Posterior vena cava (tissue), 2 donors: ENCODE measurements at regions of chr10 and their contacts with region 1.

Region 1: GRCh38 chr10:77619964-77620703 is 17.5 kb downstream of the KCNMA1 start:
- DNase-seq: no peak

Region 2: DNA sequence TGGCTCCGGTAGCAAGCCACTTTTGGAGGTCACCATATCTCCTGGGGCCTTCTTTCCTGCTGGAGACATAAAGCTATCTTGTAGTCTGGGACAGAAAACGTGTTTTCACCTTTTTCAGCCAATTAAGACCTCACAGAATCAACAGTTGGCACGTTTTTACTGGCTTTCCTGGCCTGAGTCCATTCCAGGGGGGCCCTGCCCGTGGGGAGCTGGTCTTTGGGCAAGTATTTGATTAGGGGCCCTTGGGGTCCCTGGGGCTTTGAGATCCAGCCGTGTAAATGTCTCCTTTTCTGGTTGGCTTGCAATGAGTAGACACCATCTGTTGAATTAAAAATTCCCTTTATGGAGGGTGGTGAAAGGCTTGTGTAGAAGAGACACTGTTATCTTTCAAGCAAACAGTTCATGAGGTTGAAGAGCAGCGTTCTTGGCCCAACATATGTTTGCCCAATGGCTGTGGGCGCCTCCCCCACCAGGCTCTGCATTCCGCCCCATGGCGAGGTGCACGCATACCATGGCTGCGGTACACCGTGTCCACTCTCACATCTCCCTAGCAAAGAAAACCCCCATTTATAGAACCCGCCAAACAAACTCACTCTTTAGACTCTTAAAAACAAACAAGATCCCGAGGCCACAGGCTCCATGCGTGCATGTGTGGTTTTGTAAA is 1595.5 kb before region 1 on chr10:
- intact Hi-C with region 1: loop called in 1 of 2 experiments (anchors 5 kb)
- DNase-seq: no peak

Region 3: GRCh38 chr10:77173615-77174461 is 446.3 kb before region 1 on chr10:
- intact Hi-C with region 1: loop called in 1 of 2 experiments (anchors 1 kb)
- DNase-seq: peak; percentile 85

Region 4: GRCh38 chr10:77592946-77593636 is 27.0 kb before region 1 on chr10:
- intact Hi-C with region 1: no loop called
- DNase-seq: peak; percentile 87

Region 5: DNA sequence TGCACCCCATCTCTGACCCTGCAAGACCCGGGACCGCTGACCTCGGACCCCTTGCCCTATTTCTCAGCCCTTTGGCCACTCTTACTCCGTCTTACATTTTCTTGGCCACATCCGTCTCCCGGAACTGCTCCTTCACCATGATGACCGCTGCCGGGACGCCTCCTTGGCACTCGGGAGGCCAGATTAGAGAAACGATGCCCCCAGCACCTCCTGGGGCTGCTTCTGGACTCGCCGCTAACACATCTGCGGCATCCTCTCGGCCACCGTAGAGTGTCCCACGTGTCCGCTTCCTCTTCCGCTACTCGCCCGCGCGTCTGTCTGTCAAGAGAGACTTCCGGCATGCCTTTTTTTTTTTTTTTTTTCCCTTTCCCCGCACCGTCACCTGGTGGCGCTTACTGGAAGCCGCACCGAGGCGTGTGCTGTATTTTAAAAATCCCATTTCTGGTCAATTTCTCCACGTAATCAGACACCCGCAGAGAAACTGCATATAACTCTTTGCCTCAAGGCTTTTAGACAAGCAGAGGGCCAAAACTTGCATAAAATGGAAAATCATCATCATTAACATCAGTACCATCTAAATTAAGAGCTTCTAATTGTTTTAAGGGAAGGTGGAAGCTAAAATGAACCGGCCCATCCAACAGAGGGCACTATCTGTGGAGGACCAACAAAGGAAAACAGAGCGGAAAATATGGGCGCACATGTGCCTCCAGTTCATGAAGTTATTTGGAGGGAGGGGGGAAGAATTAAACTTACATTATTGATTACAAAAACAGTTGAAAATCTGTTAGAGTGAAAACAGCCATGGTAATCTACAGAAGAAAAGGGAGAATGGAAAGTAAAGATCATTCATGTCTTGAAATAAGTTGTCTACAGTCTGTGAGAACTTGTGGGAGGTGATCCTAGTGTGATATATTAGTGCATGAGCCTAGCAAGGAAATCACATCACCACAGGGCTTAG is 409.4 kb after region 1 on chr10 and contains the start of gene POLR3A:
- intact Hi-C with region 1: no loop called
- DNase-seq: peak; percentile 99
- total RNA-seq, gene POLR3A: 8.2 to 10.1 TPM